ENCODE measurements at regions of chr17 and their contacts with region 1.

Region 1: GRCh38 chr17:43393944-43394482 is 4.8 kb upstream of the ARL4D start:
- DNase-seq: peak; percentile 69 to 81
- H3K4me3 ChIP-seq: no peak overlapping the region
- H3K27ac ChIP-seq: no peak overlapping the region
- H3K4me1 ChIP-seq: peaks cover 11% of the 10 kb centered on the region; the same call in 1 of the 2 replicates
- H3K27me3 ChIP-seq: no peaks in the 10 kb centered on the region
- CTCF ChIP-seq: peak; percentile 96

Region 2: DNA sequence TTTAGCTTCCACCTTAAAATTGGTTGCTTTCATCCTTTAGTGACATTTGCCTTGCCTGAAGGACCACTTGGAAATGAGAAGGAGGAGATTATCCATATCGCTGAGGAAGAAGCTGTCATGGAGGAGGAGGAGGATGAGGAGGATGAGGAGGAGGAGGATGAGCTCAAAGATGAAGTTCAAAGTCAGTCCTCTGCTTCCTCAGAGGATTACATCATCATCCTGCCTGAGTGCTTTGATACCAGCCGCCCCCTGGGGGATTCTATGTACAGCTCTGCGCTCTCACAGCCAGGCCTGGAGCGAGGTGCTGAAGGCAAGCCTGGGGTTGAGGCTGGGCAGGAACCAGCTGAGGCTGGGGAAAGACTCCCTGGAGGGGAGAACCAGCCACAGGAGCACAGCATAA is 193.9 kb before region 1 on chr17:
- CTCF ChIA-PET with region 1: no interaction called
- POLR2A ChIA-PET with region 1: no interaction called
- intact Hi-C with region 1: no loop called
- DNase-seq: no peak
- H3K4me3 ChIP-seq: no peak overlapping the region
- H3K27ac ChIP-seq: no peak overlapping the region
- H3K4me1 ChIP-seq: peaks cover 9% of the 10 kb centered on the region
- H3K27me3 ChIP-seq: no peaks in the 10 kb centered on the region
- CTCF ChIP-seq: no peak

Region 3: GRCh38 chr17:43418441-43419374 is 24.7 kb after region 1 on chr17:
- CTCF ChIA-PET with region 1: interaction called, 20 read pairs
- POLR2A ChIA-PET with region 1: interaction called, 3 read pairs
- intact Hi-C with region 1: no loop called
- DNase-seq: peak; percentile 74 to 81
- H3K4me3 ChIP-seq: peak overlapping the region; percentile 54; the same call in 1 of the 2 replicates
- H3K27ac ChIP-seq: peak overlapping the region; percentile 71
- H3K4me1 ChIP-seq: peaks cover 28% of the 10 kb centered on the region
- H3K27me3 ChIP-seq: no peaks in the 10 kb centered on the region
- CTCF ChIP-seq: no peak

Region 4: DNA sequence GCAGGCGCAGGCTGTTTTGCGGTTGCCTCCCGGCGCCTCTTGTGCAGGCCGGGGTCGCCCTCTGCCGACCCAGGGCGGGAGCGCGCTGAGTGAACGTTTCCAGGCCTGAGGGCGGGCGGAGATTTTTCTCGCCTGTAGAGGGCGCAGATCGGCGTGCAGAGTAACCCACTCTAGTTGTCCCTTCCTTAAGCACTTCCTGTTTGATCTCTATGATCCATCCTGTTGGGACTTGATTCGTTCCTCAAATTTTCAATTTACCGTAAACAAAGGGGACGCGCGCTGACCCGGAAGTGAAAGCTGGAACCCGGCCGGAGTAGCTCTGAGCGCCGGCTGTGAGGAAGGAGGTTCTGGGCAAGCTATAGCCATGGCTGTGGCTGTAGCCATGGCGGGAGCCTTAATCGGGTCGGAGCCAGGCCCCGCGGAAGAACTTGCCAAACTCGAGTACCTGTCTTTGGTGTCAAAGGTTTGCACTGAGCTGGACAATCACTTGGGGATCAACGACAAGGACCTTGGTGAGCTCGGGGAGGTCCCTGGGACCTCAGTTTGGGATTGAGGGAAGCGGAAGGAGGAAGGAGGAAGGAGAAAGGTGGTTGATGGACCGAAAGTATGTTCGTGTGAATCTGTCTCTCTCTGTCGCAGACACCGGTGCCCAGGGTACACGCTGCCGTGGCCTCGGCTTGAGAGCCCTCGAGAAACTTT is 89.8 kb after region 1 on chr17 and contains the start of gene DHX8:
- CTCF ChIA-PET with region 1: interaction called, 23 read pairs
- POLR2A ChIA-PET with region 1: interaction called, 7 read pairs
- intact Hi-C with region 1: loop called (anchors 1 kb)
- DNase-seq: peak; percentile 96 to 97
- H3K4me3 ChIP-seq: peak within 1 kb of the TSS; percentile 87
- H3K27ac ChIP-seq: peak within 1 kb of the TSS; percentile 56
- H3K4me1 ChIP-seq: peaks cover 19% of the 10 kb centered on the region
- H3K27me3 ChIP-seq: no peaks in the 10 kb centered on the region
- CTCF ChIP-seq: peak; percentile 100
- total RNA-seq, gene DHX8: 42.4 and 55.4 TPM in 2 replicates

Region 5: GRCh38 chr17:43618276-43618675 is 224.3 kb after region 1 on chr17:
- CTCF ChIA-PET with region 1: interaction called, 11 read pairs
- POLR2A ChIA-PET with region 1: no interaction called
- intact Hi-C with region 1: no loop called
- DNase-seq: no peak
- H3K4me3 ChIP-seq: no peak overlapping the region
- H3K27ac ChIP-seq: no peak overlapping the region
- H3K4me1 ChIP-seq: no peaks in the 10 kb centered on the region
- H3K27me3 ChIP-seq: no peaks in the 10 kb centered on the region
- CTCF ChIP-seq: no peak

Region 6: GRCh38 chr17:43673516-43674323 is 279.7 kb after region 1 on chr17:
- CTCF ChIA-PET with region 1: no interaction called
- POLR2A ChIA-PET with region 1: no interaction called
- intact Hi-C with region 1: loop called (anchors 2 kb)
- DNase-seq: peak; percentile 57 to 76
- H3K4me3 ChIP-seq: no peak overlapping the region
- H3K27ac ChIP-seq: no peak overlapping the region
- H3K4me1 ChIP-seq: peaks cover 40% of the 10 kb centered on the region
- H3K27me3 ChIP-seq: no peaks in the 10 kb centered on the region
- CTCF ChIP-seq: peak; percentile 95

Region 7: GRCh38 chr17:43891851-43892646 is 498.0 kb after region 1 on chr17:
- CTCF ChIA-PET with region 1: no interaction called
- POLR2A ChIA-PET with region 1: no interaction called
- intact Hi-C with region 1: no loop called
- DNase-seq: no peak
- H3K4me3 ChIP-seq: no peak overlapping the region
- H3K27ac ChIP-seq: no peak overlapping the region
- H3K4me1 ChIP-seq: no peaks in the 10 kb centered on the region
- H3K27me3 ChIP-seq: peaks cover 7% of the 10 kb centered on the region; the same call in 1 of the 2 replicates
- CTCF ChIP-seq: no peak

Region 8: DNA sequence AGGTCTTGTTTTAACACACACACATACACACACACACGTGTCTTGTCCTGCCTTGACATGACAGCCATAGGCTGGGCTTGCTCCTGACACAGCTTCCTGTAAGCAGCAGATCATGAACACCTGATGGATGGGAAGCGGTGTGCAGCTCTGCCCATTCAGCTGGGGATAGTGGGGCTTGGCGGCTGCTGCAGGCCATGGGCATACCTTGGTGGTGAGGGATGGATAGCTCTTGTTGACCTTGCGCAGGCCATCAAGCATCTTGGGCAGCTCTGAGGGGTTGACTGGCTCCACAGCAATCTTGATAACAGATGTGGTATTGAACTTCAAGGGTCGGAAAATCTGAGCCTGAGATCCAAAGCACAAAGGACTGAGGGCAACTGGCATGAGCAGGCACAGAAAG is 1465.7 kb after region 1 on chr17:
- CTCF ChIA-PET with region 1: no interaction called
- POLR2A ChIA-PET with region 1: interaction called, 11 read pairs
- intact Hi-C with region 1: no loop called
- DNase-seq: no peak
- H3K4me3 ChIP-seq: no peak overlapping the region
- H3K27ac ChIP-seq: no peak overlapping the region
- H3K4me1 ChIP-seq: no peaks in the 10 kb centered on the region
- H3K27me3 ChIP-seq: no peaks in the 10 kb centered on the region
- CTCF ChIP-seq: no peak